ENCODE measurements at regions of chr3 and their contacts with region 1.

Region 1: GRCh38 chr3:185929192-185930151 is 8.3 kb downstream of the TRA2B start:
- DNase-seq: no peak
- H3K4me3 Mint-ChIP-seq: peak overlapping the region; percentile 51
- H3K27ac Mint-ChIP-seq: peak overlapping the region; percentile 25
- H3K4me1 Mint-ChIP-seq: peaks cover 94% of the 10 kb centered on the region
- H3K27me3 Mint-ChIP-seq: no peaks in the 10 kb centered on the region

Region 2: GRCh38 chr3:185912929-185913901 is 16.3 kb before region 1 on chr3:
- CTCF ChIA-PET with region 1: no interaction called
- POLR2A ChIA-PET with region 1: interaction called, 113 read pairs
- DNase-seq: no peak
- H3K4me3 Mint-ChIP-seq: no peak overlapping the region
- H3K27ac Mint-ChIP-seq: no peak overlapping the region
- H3K4me1 Mint-ChIP-seq: no peaks in the 10 kb centered on the region
- H3K27me3 Mint-ChIP-seq: no peaks in the 10 kb centered on the region

Region 3: GRCh38 chr3:186790261-186790981 is 860.9 kb after region 1 on chr3:
- CTCF ChIA-PET with region 1: no interaction called
- POLR2A ChIA-PET with region 1: interaction called, 50 read pairs
- DNase-seq: no peak
- H3K4me3 Mint-ChIP-seq: no peak overlapping the region
- H3K27ac Mint-ChIP-seq: peak overlapping the region; percentile 22
- H3K4me1 Mint-ChIP-seq: peaks cover 48% of the 10 kb centered on the region
- H3K27me3 Mint-ChIP-seq: no peaks in the 10 kb centered on the region